ENCODE measurements at regions of chr11 and their contacts with region 1.

Region 1: DNA sequence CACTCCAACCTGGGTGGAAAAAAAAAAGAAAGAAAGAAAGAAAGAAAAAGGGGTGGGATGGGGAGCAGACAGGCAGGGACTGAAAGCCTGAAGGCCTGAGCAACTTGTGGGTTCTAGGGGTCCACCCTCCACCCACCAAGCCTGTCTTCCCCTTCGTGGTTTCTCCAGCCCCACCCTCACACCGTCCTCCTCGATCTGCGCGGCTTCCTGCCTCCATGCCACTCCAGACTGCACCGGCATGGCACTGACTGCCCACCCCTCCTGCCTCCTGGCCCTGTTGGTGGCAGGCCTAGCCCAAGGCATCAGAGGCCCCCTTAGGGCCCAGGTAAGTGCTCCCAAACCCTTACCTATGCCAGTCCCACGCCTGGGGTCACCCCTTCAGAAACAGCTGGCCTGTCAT is at the start of gene CTSW:
- DNase-seq: peak in 2 of 3 donors; percentile 78 to 85
- H3K4me3 ChIP-seq: peak within 1 kb of the TSS in 6 of 7 experiments; percentile 31 to 72 (median 56)
- H3K27ac ChIP-seq: peak within 1 kb of the TSS; percentile 4 to 54
- H3K4me1 ChIP-seq: peaks cover 0 to 39% (median 26%) of the 10 kb centered on the region in 4 experiments
- H3K27me3 ChIP-seq: no peaks in the 10 kb centered on the region

Region 2: GRCh38 chr11:64629796-64630562 is 1249.6 kb before region 1 on chr11:
- CTCF ChIA-PET with region 1: no interaction called
- POLR2A ChIA-PET with region 1: no interaction called
- DNase-seq: no peak
- H3K4me3 ChIP-seq: no peak overlapping the region
- H3K27ac ChIP-seq: no peak overlapping the region
- H3K4me1 ChIP-seq: peaks cover 4 to 46% (median 28%) of the 10 kb centered on the region in 4 experiments
- H3K27me3 ChIP-seq: no peaks in the 10 kb centered on the region

Region 3: DNA sequence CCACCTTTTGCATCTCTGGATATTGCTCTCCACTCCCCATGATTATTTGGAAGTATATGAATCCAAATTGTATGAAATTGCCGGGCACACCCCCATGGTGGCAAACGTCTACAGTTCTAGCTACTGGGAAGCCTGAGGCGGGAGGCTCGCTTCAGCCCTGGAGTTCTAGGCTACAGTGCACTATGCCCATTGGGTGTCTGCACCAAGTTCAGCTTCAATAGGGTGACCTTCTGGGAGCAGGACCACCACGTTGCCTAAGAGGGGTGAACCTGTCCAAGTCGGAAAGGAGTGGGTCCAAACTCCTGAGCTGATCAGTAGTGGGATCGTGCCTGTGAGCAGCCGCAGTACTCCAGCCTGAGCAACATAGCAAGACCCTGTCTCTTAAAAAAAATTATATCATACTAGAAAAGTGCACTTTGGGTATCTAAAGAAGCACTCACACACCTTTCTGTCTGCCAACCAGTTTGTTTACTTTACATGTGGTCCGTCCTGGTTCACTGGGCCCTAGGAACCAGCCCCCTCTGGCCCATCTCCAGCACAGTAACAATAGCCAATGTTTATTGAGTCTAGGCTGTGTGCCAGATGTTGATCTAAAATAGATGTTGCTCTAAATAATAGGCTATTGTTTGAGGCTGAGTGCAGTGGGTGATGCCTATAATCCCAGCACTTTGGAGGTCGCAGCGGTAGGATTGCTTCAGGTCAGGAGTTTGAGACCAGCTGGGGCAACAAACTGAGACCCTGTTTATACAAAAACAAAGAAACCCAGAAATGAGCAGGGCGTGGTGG is 184.0 kb before region 1 on chr11:
- CTCF ChIA-PET with region 1: no interaction called
- POLR2A ChIA-PET with region 1: no interaction called
- DNase-seq: no peak
- H3K4me3 ChIP-seq: no peak overlapping the region
- H3K27ac ChIP-seq: no peak overlapping the region
- H3K4me1 ChIP-seq: peaks cover 0 to 3% (median 0%) of the 10 kb centered on the region in 4 experiments
- H3K27me3 ChIP-seq: no peaks in the 10 kb centered on the region

Region 4: DNA sequence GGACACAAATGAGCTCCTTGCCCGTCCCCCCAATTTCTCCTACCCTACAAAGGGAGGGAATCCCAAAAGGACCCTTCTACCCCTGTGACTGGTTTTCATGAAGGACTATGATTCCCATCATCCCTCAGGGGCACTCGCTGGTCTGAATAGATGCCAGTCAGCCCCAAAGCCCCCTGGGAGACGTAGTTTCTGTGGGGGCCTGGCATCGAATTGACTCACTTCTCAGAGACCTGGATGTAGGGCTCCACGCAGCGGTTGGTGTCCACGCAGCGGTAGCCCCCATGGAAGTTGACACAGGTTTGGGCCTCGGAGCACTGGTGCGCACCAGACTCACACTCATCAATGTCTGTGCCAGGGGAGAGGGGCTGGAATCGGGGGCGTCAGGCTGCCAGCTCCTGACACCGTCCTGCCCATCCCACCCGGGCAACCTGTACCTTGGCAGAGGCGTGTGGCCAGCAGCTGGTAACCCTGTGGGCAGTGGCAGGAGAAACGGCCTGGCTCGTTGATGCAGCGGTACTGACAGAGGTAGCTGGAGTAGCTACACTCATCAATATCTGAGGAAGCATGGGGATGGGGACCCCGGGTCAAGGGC is 11.4 kb before region 1 on chr11:
- CTCF ChIA-PET with region 1: interaction called, 168 read pairs
- POLR2A ChIA-PET with region 1: no interaction called
- DNase-seq: peak in 2 of 3 donors; percentile 52 to 59
- H3K4me3 ChIP-seq: peak overlapping the region in 1 of 7 experiments; percentile 20
- H3K27ac ChIP-seq: no peak overlapping the region
- H3K4me1 ChIP-seq: peaks cover 0 to 43% (median 36%) of the 10 kb centered on the region in 4 experiments
- H3K27me3 ChIP-seq: no peaks in the 10 kb centered on the region

Region 5: DNA sequence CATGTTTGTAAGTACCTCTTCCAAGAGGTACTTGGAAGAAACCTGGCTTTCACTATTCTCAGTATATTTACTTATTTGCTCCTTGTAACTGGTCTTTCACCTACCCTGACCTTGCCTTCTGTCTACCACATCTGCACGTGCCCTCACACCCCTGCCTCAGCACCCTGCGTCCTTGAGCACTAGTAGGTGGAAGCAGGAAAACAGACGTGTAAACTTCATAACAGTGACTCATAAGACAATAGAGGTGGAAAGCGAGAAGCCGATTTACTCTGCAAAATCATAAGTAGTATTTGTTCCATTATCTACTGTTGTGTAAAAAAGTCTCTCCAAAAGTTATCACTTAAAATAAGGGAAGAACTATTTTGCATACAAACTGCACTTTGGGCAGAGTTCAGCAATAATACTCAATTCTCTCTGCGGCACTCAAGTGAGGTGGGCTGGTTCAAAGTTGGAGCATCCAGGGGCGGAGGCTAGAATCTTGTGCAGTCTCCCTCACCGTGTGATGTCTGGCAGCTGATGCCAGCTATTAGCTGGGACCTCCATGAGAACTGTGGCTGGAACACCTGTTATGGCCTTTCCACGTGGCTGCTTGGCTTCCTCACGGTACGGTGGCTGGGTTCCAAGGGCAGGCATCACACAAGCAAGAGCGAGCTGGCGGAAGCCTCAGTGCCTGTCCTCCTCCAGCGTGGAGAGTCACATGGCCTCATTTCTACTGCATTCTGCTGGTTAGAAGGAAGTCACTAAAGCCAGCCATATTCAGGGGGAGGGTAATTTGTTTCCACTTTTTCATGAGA is 220.9 kb after region 1 on chr11:
- CTCF ChIA-PET with region 1: no interaction called
- POLR2A ChIA-PET with region 1: no interaction called
- DNase-seq: peak; percentile 67 to 93 (median 89)
- H3K4me3 ChIP-seq: peak overlapping the region in 6 of 7 experiments; percentile 27 to 64 (median 38)
- H3K27ac ChIP-seq: peak overlapping the region in 1 of 2 experiments; percentile 55
- H3K4me1 ChIP-seq: peaks cover 8 to 23% (median 19%) of the 10 kb centered on the region in 4 experiments
- H3K27me3 ChIP-seq: no peaks in the 10 kb centered on the region

Measured in common myeloid progenitor, CD34-positive (primary cell).